Endothelial cell of umbilical vein (primary cell): ENCODE measurements at regions of chr17 and their contacts with region 1.

Region 1: DNA sequence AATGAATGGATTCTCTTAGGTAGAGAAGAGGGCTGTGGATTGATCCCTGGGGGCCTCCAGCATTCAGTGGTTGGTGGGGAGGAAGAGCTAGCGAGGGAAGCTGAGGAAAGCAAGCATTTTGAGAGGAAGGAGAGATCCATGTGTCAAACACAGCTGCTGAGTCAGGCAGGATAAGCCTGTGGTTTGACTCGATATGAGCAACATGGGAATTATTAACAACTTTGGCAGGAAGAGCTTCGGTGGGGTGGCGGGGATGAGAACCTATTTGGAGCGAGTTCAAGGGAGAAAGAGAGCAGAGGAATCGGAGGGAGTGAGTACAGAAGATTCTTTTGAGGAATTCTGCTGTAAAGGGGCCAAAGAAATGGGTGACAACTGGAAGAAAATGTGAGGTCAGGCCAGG is 59.5 kb upstream of the CDC42EP4 start:
- DNase-seq: no peak
- H3K4me3 ChIP-seq: no peak overlapping the region
- H3K27ac ChIP-seq: no peak overlapping the region
- H3K4me1 ChIP-seq: no peaks in the 10 kb centered on the region
- H3K27me3 ChIP-seq: peaks cover 0 to 3% of the 10 kb centered on the region in 2 experiments
- CTCF ChIP-seq: no peak
- POLR2A ChIP-seq: no peak

Region 2: DNA sequence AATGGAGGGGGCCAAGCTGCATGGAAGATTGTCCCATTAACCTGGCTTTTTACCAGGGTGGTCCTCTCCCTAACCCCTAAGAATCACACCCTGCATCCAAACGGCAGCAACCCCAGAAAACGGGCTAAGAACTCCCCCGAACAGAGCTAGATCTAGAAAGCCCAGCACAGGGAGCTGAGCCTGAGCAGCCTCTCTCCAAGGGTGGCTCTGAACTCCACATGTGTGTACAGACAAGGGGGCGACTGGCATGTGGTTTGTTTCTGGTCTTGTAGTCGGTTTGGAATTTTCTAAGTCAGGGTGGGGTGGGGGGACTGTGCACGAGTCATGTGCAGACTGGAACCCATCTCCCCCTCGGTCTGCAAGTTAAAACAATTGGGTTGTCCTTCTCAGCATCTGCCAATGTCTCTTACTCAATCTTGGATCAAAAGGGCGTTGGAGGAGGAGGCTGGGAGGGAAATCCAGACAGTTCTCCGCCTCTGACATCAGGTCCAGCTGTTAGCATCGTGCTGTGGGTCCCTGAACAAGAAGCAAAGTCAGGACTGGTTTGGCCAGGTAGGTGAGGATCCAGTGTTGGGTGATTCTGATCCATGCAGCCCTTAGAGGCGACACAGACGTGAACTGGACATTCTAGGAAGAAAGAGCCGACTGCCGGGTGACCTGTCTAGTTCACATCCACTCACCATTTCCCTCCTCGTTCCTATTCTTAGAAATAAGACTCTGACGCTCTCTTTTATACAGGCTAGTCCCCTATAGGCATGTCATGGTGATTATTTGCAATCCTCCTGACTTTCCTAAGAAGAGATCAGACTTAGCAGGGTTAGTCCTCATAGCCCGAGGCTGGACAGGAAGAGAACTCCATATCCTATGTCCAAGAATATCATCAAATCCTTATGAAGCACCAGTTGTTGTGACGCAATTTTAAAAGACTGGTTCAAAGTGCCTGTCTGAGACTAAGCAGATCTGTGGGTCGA is 868.6 kb before region 1 on chr17:
- CTCF ChIA-PET with region 1: no interaction called
- POLR2A ChIA-PET with region 1: no interaction called
- dilution Hi-C with region 1: no loop called
- intact Hi-C with region 1: no loop called
- DNase-seq: no peak
- H3K4me3 ChIP-seq: no peak overlapping the region
- H3K27ac ChIP-seq: no peak overlapping the region
- H3K4me1 ChIP-seq: no peaks in the 10 kb centered on the region
- H3K27me3 ChIP-seq: no peaks in the 10 kb centered on the region
- CTCF ChIP-seq: no peak
- POLR2A ChIP-seq: no peak

Region 3: GRCh38 chr17:73042809-73043685 is 328.2 kb before region 1 on chr17:
- CTCF ChIA-PET with region 1: no interaction called
- POLR2A ChIA-PET with region 1: no interaction called
- dilution Hi-C with region 1: no loop called
- intact Hi-C with region 1: no loop called
- DNase-seq: no peak
- H3K4me3 ChIP-seq: no peak overlapping the region
- H3K27ac ChIP-seq: no peak overlapping the region
- H3K4me1 ChIP-seq: no peaks in the 10 kb centered on the region
- H3K27me3 ChIP-seq: no peaks in the 10 kb centered on the region
- CTCF ChIP-seq: no peak
- POLR2A ChIP-seq: no peak

Region 4: GRCh38 chr17:73192894-73193701 is 178.2 kb before region 1 on chr17 and contains the start of gene COG1:
- CTCF ChIA-PET with region 1: interaction called, 55 read pairs
- POLR2A ChIA-PET with region 1: no interaction called
- dilution Hi-C with region 1: no loop called
- intact Hi-C with region 1: loop called (anchors 1 kb)
- DNase-seq: peak; percentile 86
- H3K4me3 ChIP-seq: peak within 1 kb of the TSS; percentile 78 to 94 (median 78)
- H3K27ac ChIP-seq: peak within 1 kb of the TSS; percentile 56
- H3K4me1 ChIP-seq: peaks cover 14% of the 10 kb centered on the region
- H3K27me3 ChIP-seq: no peaks in the 10 kb centered on the region
- CTCF ChIP-seq: no peak
- POLR2A ChIP-seq: peak; percentile 77
- total RNA-seq, gene COG1: 38.6 and 39.0 TPM in 2 replicates

Region 5: DNA sequence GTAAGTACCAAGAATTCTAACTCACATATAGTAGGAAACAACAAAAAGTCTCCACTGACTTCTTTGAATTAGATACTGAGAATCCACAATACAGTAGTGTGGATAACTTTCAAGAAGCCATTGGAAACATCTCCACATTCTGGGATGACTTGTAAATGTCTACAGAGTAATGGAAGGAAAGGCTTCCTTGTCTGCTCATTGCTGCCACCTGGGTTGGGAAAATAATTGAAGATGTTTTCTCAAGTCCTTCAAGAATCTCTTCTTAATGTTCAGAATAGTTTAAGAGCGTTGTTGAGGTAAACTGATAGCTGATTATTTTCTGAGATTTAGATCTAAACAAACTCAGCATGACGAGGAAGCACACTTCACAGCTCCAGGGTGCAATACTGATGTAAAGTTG is 123.6 kb before region 1 on chr17:
- CTCF ChIA-PET with region 1: interaction called, 376 read pairs
- POLR2A ChIA-PET with region 1: no interaction called
- dilution Hi-C with region 1: no loop called
- intact Hi-C with region 1: no loop called
- DNase-seq: peak; percentile 29
- H3K4me3 ChIP-seq: no peak overlapping the region
- H3K27ac ChIP-seq: no peak overlapping the region
- H3K4me1 ChIP-seq: no peaks in the 10 kb centered on the region
- H3K27me3 ChIP-seq: no peaks in the 10 kb centered on the region
- CTCF ChIP-seq: no peak
- POLR2A ChIP-seq: no peak

Region 6: DNA sequence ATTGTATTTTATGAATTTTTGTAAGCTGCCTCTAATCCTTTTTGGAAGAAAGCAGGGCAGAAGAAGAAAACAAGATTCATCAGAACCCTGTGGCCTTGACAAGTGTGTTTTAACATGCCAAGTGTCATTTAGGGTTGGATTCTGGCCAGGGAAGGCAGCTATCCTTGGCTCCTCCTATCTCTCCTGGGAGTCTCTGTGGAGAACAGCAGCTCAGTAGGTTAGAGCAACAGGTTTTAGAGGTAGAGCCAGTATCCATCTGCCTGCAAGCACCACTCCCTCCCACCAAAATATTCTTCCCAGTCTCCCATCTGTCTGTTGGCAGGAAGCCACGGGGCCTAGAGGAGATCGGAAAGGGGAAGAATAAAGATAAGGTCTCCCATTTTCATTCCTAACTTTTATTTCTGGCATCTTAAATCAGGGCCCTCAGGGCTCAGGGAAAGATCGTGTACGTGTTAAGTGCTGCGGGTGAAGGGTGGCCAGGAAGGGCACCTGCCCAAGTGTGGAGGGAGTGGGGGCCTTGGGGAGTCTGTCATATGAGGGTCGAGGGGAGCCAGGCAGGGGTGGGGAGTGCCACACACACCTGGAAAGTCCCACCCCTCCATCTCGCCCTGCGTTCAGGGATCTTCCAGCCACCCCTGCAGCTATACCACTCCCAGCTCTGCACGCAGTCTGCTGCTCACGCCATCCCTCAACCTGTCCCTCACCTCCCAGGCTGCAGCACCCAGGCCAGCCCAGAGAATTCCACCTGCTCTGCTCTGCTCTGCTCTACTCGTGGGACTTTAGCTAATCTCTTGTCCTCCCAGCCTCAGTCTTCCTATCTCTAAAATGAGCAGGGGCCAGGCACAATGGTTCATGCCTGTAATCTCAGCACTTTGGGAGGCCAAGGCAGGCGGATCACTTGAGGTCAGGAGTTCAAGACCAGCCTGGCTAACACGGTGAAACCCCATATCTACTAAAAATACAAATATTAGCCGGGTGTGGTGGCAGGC is 92.5 kb before region 1 on chr17:
- CTCF ChIA-PET with region 1: interaction called, 16 read pairs
- POLR2A ChIA-PET with region 1: no interaction called
- dilution Hi-C with region 1: no loop called
- intact Hi-C with region 1: no loop called
- DNase-seq: peak; percentile 60
- H3K4me3 ChIP-seq: no peak overlapping the region
- H3K27ac ChIP-seq: no peak overlapping the region
- H3K4me1 ChIP-seq: no peaks in the 10 kb centered on the region
- H3K27me3 ChIP-seq: no peaks in the 10 kb centered on the region
- CTCF ChIP-seq: no peak
- POLR2A ChIP-seq: no peak

Region 7: DNA sequence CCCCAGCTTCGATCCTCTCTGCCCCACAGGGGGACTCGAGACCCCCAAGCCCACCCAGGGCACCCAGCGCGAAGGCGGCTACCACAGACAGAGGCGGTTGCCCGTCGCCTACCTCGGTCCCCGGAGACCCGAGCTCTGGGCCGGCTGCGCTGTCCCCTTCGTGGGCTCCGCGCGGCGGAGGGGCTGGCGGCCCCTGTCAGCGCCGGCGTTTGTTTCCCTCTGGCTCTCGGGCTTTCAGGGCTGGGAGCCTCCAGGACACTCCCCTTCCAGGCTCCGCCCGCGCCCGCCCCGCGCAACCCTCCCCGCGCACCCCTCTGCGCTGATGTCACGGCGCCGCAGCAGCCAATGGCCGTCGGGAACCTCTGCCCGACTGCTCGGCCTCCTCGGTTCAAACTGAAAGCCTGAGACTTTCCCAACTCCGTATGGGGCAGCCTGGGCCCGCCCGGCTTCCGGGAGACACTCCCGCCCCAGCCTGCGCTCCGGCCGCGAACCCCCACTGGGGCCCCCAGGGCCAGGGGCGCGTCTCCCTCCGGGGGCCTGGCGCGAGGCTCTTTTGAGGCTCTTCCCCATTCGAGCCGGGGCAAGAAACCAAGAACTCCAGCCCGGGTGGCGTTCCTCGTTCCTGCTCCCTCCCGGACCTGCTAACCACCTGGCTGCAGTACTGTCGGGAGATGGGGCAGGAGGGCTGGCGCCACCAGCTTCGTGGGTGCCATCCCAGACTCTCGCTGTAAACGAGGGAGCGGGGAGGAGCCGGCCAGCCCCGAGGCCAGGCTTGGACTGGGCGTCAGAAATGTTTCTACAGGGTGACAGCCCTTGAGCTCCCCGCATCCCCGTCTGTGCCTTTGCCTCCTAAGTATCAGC is 59.3 kb before region 1 on chr17 and contains the start of gene CDC42EP4:
- CTCF ChIA-PET with region 1: interaction called, 70 read pairs
- POLR2A ChIA-PET with region 1: interaction called, 3 read pairs
- dilution Hi-C with region 1: no loop called
- intact Hi-C with region 1: loop called (anchors 1 kb)
- DNase-seq: peak; percentile 95
- H3K4me3 ChIP-seq: peak within 1 kb of the TSS; percentile 82 to 97 (median 88)
- H3K27ac ChIP-seq: peak within 1 kb of the TSS; percentile 80
- H3K4me1 ChIP-seq: peaks cover 27% of the 10 kb centered on the region
- H3K27me3 ChIP-seq: peaks cover 2% of the 10 kb centered on the region in 2 experiments
- CTCF ChIP-seq: no peak
- POLR2A ChIP-seq: peak; percentile 80
- total RNA-seq, gene CDC42EP4: 18.8 and 19.6 TPM in 2 replicates

Region 8: GRCh38 chr17:73342050-73342522 is 29.2 kb before region 1 on chr17:
- CTCF ChIA-PET with region 1: interaction called, 14 read pairs
- POLR2A ChIA-PET with region 1: no interaction called
- dilution Hi-C with region 1: no loop called
- intact Hi-C with region 1: no loop called
- DNase-seq: peak; percentile 86
- H3K4me3 ChIP-seq: no peak overlapping the region
- H3K27ac ChIP-seq: peak overlapping the region; percentile 16
- H3K4me1 ChIP-seq: peaks cover 8% of the 10 kb centered on the region
- H3K27me3 ChIP-seq: no peaks in the 10 kb centered on the region
- CTCF ChIP-seq: no peak
- POLR2A ChIP-seq: no peak